ENCODE measurements at regions of chr11 and their contacts with region 1.

Region 1: DNA sequence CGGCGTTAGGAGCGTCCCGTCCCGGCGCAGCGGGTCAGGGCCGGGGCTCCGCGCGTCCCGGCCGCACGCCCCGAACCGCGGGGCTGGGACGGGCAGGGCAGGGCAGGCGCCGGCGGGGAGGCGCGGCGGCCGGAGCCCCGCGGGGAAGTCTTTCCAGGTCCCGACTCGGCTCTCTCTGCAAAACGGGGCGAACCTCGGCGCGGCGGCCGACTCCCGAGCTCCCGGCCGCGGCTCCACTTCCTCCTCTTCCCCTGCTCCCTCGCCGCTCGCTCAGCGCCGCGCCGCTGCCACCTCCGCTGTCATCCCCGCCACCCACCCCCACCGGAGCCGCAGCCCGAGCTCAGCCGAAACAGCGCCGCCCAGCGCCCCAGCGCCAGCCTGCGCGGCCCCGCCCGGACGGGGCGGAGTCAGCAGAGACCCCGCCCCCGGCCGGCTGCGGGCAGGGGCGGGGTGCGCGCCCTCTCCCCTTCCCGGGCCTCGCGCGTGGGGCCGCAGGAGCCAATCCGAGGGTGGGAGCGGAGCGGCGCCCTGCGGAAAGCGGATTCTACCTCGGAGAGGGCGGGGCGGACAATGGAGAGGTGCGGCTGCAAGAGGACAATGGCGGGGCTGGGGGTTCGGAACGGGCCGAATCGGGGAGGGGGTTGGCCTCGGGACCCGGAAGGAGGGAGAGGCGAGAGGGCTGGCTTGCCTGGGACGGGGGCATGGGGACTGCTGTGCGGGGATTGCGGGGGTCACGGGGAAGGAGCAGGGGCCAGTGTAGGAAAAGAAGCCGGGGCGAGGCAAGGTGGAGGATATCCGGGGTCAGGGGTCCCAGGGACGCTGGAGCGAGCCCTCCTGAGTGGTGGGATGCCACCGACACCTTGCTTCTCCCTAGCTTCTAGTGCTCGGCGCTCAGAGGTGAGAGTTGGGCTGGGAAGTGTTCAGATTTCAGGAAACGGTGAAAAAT is at the start of gene GDPD5:
- DNase-seq: peak; percentile 85
- ATAC-seq: peak; percentile 87
- H3K4me3 Mint-ChIP-seq: peak within 1 kb of the TSS; percentile 86
- H3K27ac Mint-ChIP-seq: no peak within 1 kb of the TSS
- H3K4me1 Mint-ChIP-seq: peaks cover 11% of the 10 kb centered on the region
- H3K27me3 Mint-ChIP-seq: peaks cover 39% of the 10 kb centered on the region
- CTCF ChIP-seq: no peak
- total RNA-seq, gene GDPD5: 4.7 to 12.2 TPM (median 5.3 TPM) in 3 replicates

Region 2: DNA sequence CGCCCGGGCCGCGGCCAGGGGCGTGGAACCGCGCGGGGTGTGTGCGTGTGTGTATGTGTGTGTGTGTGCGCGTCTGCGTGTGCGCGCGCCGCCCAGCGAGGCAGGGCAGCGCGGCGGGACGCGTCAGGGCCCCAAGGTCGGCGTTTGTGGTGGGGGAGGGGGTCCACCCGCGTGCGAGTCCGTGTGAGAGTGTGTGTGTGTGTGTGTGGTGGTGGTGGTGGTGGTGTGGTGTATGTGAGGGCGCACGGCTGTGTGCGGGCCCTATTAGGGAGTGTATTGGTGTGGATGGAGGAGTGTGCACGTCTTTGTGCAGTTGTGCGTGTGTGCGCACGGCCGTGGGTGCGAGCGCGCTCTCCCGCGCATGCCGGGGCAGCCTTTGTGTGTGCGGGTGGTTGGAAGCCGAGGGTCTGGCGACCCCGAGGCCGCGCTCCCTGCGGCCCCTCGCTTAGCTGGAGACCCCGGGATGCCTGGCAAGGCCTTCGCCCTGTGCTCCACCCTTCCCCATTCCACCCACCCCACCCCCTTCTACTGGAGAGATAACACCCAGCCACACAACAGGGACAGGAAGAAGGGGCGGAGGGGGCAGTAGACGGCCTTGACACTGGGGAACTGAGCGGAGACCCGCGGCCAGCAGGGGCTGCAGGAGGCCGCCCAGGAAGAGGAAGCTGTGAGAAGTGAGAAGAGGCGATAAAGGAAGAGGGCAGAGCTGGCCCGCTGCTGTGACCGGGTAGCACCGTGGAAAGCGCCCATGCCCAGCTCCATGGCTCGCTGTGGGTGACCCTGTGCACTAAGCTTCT is 173.9 kb before region 1 on chr11:
- CTCF ChIA-PET with region 1: no interaction called
- POLR2A ChIA-PET with region 1: no interaction called
- DNase-seq: peak; percentile 66
- ATAC-seq: peak; percentile 73
- H3K4me3 Mint-ChIP-seq: peak overlapping the region; percentile 73
- H3K27ac Mint-ChIP-seq: 0 out of 2 replicates have a peak overlapping the region, but pooled peaks have one; percentile 30
- H3K4me1 Mint-ChIP-seq: peaks cover 58% of the 10 kb centered on the region
- H3K27me3 Mint-ChIP-seq: peaks cover 8% of the 10 kb centered on the region
- CTCF ChIP-seq: no peak

Region 3: GRCh38 chr11:75445315-75445953 is 80.4 kb before region 1 on chr11:
- CTCF ChIA-PET with region 1: interaction called, 69 read pairs
- POLR2A ChIA-PET with region 1: no interaction called
- DNase-seq: peak; percentile 88
- ATAC-seq: peak; percentile 91
- H3K4me3 Mint-ChIP-seq: no peak overlapping the region
- H3K27ac Mint-ChIP-seq: no peak overlapping the region
- H3K4me1 Mint-ChIP-seq: no peaks in the 10 kb centered on the region
- H3K27me3 Mint-ChIP-seq: no peaks in the 10 kb centered on the region; the same call in none of the 2 replicates
- CTCF ChIP-seq: peak; percentile 97

Region 4: DNA sequence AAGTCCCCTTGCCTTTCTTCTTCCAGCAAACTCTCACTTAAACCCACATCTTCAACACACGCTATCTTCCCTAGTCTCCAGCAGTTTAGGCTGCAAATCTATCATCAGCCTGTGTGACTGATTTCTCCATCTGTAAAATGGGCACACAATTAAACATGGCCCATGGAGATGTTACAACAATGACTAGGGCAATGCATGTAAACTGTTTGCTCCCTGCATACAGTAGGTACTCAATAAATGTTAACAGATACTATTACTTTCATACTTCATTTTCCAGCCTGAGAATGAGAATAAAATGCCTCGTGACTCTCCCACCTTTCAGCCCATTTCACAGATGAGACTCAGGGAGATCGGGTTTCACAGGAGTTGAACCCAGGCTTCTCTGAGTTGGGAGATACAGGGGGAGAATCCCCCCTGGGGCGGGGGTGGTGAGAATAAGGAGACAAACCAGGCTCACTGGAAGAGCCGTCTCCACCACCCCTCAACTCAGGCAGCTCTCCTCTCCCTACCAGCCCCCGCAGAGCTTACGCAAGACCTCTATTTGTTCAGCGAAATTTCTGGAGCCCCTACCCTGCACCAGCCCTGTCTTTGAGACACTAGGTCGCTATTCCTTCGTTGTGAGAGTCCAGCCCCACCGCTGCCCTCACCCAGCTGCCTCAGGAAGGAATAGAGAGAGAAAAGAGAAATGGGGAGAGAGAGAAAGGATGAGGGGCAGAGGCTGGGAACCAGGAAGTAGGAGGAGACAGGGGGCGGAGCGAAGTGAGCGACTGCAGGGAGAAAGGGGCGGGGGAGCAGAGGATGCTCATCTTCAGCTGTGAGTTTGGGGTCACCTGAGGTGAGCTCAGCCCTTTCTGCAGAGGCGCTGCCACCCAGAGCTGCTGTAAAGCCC is 50.7 kb before region 1 on chr11:
- CTCF ChIA-PET with region 1: interaction called, 12 read pairs
- POLR2A ChIA-PET with region 1: no interaction called
- DNase-seq: peak; percentile 85
- ATAC-seq: peak; percentile 92
- H3K4me3 Mint-ChIP-seq: peak overlapping the region; percentile 60
- H3K27ac Mint-ChIP-seq: peak overlapping the region; percentile 76; the same call in 1 of the 2 replicates
- H3K4me1 Mint-ChIP-seq: peaks cover 22% of the 10 kb centered on the region
- H3K27me3 Mint-ChIP-seq: no peaks in the 10 kb centered on the region; the same call in 1 of the 2 replicates
- CTCF ChIP-seq: no peak

Region 5: DNA sequence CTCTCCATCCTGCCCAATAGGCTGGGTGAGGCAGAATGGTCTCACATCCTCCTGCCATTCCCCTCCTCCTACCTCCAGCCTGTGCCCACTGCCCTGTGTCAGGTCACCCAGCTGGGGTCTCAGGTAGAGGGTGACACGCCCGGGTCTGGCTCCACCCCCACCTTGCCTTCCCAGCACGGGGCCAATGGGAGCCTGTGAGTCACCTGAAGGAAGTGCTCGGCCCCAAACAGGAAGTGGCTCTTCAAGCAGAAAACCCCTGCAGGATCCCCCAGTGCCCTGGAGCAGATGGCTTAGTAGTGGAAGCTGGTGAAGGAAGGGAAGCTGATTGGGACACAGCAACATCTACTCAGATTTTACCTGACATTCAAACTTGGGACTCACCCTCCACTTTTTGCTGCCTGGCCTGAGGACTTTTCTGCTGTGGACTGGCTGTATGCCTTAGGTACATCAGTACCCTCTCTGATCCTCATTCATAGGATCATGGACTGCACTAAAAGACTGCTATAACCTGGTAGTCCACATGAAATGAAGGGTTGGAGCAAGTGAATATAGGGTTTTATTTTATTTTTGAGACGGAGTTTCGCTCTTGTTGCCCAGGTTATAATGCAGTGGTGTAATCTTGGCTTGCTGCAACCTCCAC is 33.6 kb before region 1 on chr11:
- CTCF ChIA-PET with region 1: interaction called, 21 read pairs
- POLR2A ChIA-PET with region 1: no interaction called
- DNase-seq: peak; percentile 32
- ATAC-seq: peak; percentile 64
- H3K4me3 Mint-ChIP-seq: no peak overlapping the region
- H3K27ac Mint-ChIP-seq: no peak overlapping the region
- H3K4me1 Mint-ChIP-seq: peaks cover 24% of the 10 kb centered on the region
- H3K27me3 Mint-ChIP-seq: no peaks in the 10 kb centered on the region
- CTCF ChIP-seq: no peak

Region 6: GRCh38 chr11:75591371-75591770 is 65.5 kb after region 1 on chr11:
- CTCF ChIA-PET with region 1: no interaction called
- POLR2A ChIA-PET with region 1: no interaction called
- DNase-seq: no peak
- ATAC-seq: no peak
- H3K4me3 Mint-ChIP-seq: no peak overlapping the region
- H3K27ac Mint-ChIP-seq: no peak overlapping the region
- H3K4me1 Mint-ChIP-seq: peaks cover 9% of the 10 kb centered on the region
- H3K27me3 Mint-ChIP-seq: no peaks in the 10 kb centered on the region; the same call in none of the 2 replicates
- CTCF ChIP-seq: no peak

Region 7: GRCh38 chr11:76048763-76049162 is 522.9 kb after region 1 on chr11:
- CTCF ChIA-PET with region 1: no interaction called
- POLR2A ChIA-PET with region 1: no interaction called
- DNase-seq: peak; percentile 25
- ATAC-seq: no peak
- H3K4me3 Mint-ChIP-seq: no peak overlapping the region
- H3K27ac Mint-ChIP-seq: no peak overlapping the region
- H3K4me1 Mint-ChIP-seq: peaks cover 21% of the 10 kb centered on the region
- H3K27me3 Mint-ChIP-seq: no peaks in the 10 kb centered on the region
- CTCF ChIP-seq: no peak

Measured in WTC11 (cell line).